ENCODE measurements at regions of chr2 and their contacts with region 1.

Region 1: GRCh38 chr2:69062307-69062962 is 49.5 kb downstream of the ANTXR1 start:
- DNase-seq: peak; percentile 39
- ATAC-seq: peak; percentile 86
- H3K4me3 ChIP-seq: no peak overlapping the region
- H3K27ac ChIP-seq: peak overlapping the region; percentile 53
- H3K4me1 ChIP-seq: peaks cover 18% of the 10 kb centered on the region
- H3K27me3 ChIP-seq: no peaks in the 10 kb centered on the region
- CTCF ChIP-seq: no peak

Region 2: DNA sequence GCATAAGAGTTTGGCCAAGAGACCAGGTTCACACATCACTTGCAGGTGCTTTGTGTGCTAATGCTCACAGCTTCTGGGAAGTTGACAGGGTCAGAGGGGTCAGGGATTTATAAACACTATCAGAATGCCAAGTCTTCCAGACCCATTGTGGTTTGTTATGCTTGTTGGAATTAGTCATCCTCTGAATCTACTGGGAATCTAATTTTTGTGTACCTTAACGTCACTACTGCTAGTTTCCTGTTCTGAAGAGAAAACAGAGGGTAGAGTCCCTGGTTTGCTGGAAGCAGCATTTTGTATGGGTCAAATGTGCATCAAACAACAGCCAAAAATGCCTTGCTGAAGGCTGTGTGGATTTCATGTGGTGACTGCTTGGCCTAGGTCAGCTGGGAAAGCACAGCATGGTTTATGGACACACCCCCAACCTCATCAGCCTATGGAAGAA is 16.2 kb before region 1 on chr2:
- CTCF ChIA-PET with region 1: no interaction called
- POLR2A ChIA-PET with region 1: no interaction called
- intact Hi-C with region 1: loop called (anchors 2 kb)
- DNase-seq: peak; percentile 85
- ATAC-seq: peak; percentile 97
- H3K4me3 ChIP-seq: no peak overlapping the region
- H3K27ac ChIP-seq: peak overlapping the region; percentile 73
- H3K4me1 ChIP-seq: peaks cover 22% of the 10 kb centered on the region
- H3K27me3 ChIP-seq: no peaks in the 10 kb centered on the region
- CTCF ChIP-seq: no peak

Region 3: DNA sequence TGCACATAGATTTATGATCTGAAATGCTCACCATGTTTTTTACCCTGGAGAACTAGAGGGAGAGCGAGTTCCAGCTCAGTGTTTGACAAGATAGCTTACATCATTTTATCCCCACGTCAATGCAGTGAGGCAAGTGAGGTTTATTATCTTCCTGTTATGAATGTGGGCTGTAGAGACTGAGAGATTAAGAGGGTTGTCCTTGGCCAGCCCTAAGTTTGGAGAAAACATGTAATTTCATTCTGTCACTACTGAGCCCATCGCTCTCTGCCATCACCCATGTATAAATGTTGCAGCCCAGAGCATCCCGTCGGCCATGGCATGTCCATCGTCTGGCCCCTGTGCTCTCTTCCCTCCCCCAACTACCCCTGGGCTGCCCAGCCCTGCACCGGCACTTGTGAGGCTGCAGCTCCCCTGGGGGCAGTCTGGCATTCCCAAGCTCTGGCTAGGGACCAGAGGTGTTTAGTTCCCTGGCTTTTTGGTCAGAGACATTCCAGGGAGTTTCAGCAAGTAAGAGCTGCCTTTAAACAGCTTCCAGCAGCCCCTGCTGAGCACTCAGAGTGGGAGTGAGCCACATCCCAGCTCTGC is 87.3 kb after region 1 on chr2:
- CTCF ChIA-PET with region 1: no interaction called
- POLR2A ChIA-PET with region 1: no interaction called
- intact Hi-C with region 1: no loop called
- DNase-seq: no peak
- ATAC-seq: no peak
- H3K4me3 ChIP-seq: no peak overlapping the region
- H3K27ac ChIP-seq: no peak overlapping the region
- H3K4me1 ChIP-seq: no peaks in the 10 kb centered on the region
- H3K27me3 ChIP-seq: no peaks in the 10 kb centered on the region
- CTCF ChIP-seq: no peak

Region 4: GRCh38 chr2:69222953-69223658 is 160.7 kb after region 1 on chr2:
- CTCF ChIA-PET with region 1: no interaction called
- POLR2A ChIA-PET with region 1: no interaction called
- intact Hi-C with region 1: no loop called
- DNase-seq: no peak
- ATAC-seq: no peak
- H3K4me3 ChIP-seq: no peak overlapping the region
- H3K27ac ChIP-seq: no peak overlapping the region
- H3K4me1 ChIP-seq: peaks cover 10% of the 10 kb centered on the region; the same call in 1 of the 2 replicates
- H3K27me3 ChIP-seq: no peaks in the 10 kb centered on the region
- CTCF ChIP-seq: no peak

Measured in PC-3 (cell line).